ENCODE measurements at regions of chr11 and their contacts with region 1.

Region 1: GRCh38 chr11:44556735-44557409 is 8.6 kb upstream of the CD82 start:
- DNase-seq: peak; percentile 76
- H3K4me3 Mint-ChIP-seq: no peak overlapping the region
- H3K27ac Mint-ChIP-seq: no peak overlapping the region
- H3K4me1 Mint-ChIP-seq: peaks cover 32% of the 10 kb centered on the region
- H3K27me3 Mint-ChIP-seq: peaks cover 5% of the 10 kb centered on the region

Region 2: DNA sequence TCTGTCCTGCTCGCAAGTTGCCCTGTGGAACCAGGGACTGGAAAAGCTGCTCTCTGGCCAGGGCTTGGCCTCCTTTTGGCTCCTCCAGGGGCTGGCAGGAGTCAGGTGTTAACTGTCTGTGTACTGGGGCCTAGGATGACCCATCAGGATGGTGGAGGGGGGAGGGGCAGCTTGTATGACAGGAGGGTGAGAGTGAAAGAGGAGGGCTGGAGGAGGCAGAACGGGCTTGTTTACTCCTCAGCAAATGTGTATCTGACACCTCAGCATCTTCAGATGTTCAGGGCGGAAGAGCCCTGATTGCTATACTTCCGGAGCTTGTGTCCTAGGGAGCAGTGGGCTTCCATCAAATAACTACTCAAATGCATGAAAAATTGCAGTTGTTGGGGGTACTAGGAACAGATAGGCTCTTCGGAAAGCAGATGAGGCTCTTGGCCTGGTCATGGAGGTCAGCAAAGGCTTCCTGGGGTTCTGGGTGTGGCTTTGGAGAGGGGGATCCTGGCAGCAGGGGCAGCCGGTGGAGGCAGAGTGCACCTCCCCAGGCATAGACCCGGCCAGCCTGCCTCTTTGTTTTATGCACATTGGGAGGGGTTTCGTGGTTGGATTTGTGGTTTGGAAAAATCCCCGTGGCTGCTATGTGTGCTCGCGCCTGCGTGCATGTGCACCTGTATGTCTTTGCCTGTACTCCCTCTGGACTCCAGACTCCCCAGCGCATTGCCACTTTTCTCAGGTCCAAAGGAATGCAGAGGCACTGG is 39.8 kb after region 1 on chr11:
- CTCF ChIA-PET with region 1: interaction called, 16 read pairs
- DNase-seq: peak; percentile 87
- H3K4me3 Mint-ChIP-seq: peak overlapping the region; percentile 64
- H3K27ac Mint-ChIP-seq: peak overlapping the region; percentile 99
- H3K4me1 Mint-ChIP-seq: peaks cover 76% of the 10 kb centered on the region
- H3K27me3 Mint-ChIP-seq: no peaks in the 10 kb centered on the region

Region 3: DNA sequence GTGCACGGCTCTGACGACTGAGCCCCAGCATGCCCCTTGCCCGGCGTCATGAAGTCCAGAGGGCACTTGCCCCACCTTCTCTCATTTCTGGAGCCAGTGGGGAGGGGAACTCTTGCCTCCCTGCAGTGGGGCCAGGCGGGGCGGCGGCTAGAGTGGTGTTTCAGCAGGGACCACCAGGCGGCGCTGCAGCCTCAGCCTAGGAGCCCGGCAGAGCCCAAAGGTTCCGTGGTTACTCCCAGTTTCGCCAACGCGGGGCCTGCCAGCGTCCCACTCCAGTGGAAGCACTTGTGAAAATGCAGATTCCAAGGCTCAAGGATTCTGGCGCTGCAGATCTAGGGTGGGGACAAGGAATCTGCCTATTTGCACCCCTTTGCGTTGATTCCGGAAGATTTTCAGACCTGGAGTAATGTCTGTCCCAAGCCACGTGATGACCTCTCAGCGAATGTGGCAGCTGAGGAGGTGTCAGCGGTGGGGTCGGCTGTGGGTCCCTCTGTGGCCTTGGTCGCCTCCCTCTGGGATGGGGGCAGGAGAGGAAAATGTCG is 64.3 kb after region 1 on chr11:
- CTCF ChIA-PET with region 1: interaction called, 403 read pairs
- DNase-seq: peak; percentile 70
- H3K4me3 Mint-ChIP-seq: no peak overlapping the region
- H3K27ac Mint-ChIP-seq: no peak overlapping the region
- H3K4me1 Mint-ChIP-seq: peaks cover 34% of the 10 kb centered on the region
- H3K27me3 Mint-ChIP-seq: no peaks in the 10 kb centered on the region

Region 4: DNA sequence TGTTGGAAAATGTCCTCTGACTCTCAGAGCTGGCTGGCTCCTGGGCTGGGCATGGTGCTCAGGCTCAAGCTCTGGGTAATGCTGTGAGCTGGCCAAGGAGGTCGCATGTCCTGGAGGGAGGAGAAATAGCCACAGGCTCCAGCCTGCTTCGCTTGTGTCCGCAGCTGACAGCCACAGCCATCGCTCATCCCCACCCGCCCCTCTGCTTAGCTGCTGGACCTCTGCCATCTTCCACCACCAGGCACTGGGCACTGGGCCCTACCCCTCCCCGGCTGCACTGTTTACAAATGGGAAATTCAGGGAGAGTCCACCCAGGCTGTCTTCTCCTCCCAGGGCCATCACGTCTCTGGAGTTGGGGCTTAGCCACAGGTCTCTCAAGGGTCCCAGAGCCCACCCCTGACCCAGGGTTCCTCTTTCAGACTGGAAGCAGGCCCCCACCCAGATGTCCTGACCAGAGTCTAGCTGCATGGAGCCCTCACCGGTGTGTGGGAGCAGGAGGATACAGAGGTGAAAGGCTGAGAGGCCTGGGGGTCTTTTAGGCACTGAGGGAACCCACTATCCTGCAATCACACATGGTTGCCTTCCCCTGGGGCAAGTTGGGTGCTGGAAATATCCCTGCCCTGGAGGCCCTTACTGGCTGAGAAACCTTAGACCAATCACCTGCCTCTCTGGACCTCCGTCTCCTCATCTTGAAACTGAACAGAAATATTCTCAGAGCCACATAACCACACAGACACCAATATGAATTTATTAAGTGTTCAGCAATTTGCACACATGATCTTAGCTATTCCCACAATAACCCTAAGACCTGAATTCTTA is 71.2 kb after region 1 on chr11:
- CTCF ChIA-PET with region 1: interaction called, 53 read pairs
- DNase-seq: peak; percentile 11
- H3K4me3 Mint-ChIP-seq: no peak overlapping the region
- H3K27ac Mint-ChIP-seq: no peak overlapping the region
- H3K4me1 Mint-ChIP-seq: peaks cover 10% of the 10 kb centered on the region
- H3K27me3 Mint-ChIP-seq: peaks cover 41% of the 10 kb centered on the region

Region 5: GRCh38 chr11:44775366-44775984 is 218.6 kb after region 1 on chr11:
- CTCF ChIA-PET with region 1: interaction called, 36 read pairs
- DNase-seq: peak; percentile 75
- H3K4me3 Mint-ChIP-seq: no peak overlapping the region
- H3K27ac Mint-ChIP-seq: no peak overlapping the region
- H3K4me1 Mint-ChIP-seq: peaks cover 6% of the 10 kb centered on the region
- H3K27me3 Mint-ChIP-seq: peaks cover 4% of the 10 kb centered on the region

Region 6: GRCh38 chr11:44911029-44911814 is 354.4 kb after region 1 on chr11:
- CTCF ChIA-PET with region 1: interaction called, 15 read pairs
- DNase-seq: peak; percentile 89
- H3K4me3 Mint-ChIP-seq: no peak overlapping the region
- H3K27ac Mint-ChIP-seq: no peak overlapping the region
- H3K4me1 Mint-ChIP-seq: peaks cover 3% of the 10 kb centered on the region
- H3K27me3 Mint-ChIP-seq: no peaks in the 10 kb centered on the region